ENCODE measurements at regions of chr5 and their contacts with region 1.

Region 1: DNA sequence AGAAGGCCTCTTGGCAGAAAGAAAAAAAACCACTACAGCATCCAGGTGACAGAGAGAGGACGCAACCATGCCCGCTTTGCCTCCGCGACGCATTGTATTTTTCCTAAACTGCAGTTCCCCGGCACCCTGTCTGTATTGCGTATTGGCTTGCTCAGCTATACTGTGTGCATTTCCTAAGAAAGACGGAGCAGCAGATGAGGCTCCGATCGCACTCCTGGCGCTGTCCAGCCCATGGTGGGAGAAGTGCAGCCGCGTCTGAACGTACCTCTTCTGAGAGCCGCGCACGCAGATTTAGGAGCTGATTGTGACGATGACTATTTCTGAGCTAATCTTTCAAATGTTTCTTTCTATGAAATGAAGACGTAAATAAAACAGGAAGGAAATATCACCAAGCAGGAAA is 366.5 kb downstream of the IRX1 start:
- DNase-seq: no peak
- H3K4me3 ChIP-seq: no peak overlapping the region
- H3K27ac ChIP-seq: no peak overlapping the region
- H3K4me1 ChIP-seq: no peaks in the 10 kb centered on the region
- H3K27me3 ChIP-seq: no peaks in the 10 kb centered on the region
- CTCF ChIP-seq: no peak
- EP300 ChIP-seq: no peak
- POLR2A ChIP-seq: no peak

Region 2: GRCh38 chr5:3671337-3671736 is 290.8 kb before region 1 on chr5:
- in situ Hi-C with region 1: no loop called
- intact Hi-C with region 1: no loop called
- DNase-seq: no peak
- H3K4me3 ChIP-seq: no peak overlapping the region
- H3K27ac ChIP-seq: no peak overlapping the region
- H3K4me1 ChIP-seq: no peaks in the 10 kb centered on the region
- H3K27me3 ChIP-seq: no peaks in the 10 kb centered on the region
- CTCF ChIP-seq: no peak
- EP300 ChIP-seq: no peak
- POLR2A ChIP-seq: no peak

Region 3: DNA sequence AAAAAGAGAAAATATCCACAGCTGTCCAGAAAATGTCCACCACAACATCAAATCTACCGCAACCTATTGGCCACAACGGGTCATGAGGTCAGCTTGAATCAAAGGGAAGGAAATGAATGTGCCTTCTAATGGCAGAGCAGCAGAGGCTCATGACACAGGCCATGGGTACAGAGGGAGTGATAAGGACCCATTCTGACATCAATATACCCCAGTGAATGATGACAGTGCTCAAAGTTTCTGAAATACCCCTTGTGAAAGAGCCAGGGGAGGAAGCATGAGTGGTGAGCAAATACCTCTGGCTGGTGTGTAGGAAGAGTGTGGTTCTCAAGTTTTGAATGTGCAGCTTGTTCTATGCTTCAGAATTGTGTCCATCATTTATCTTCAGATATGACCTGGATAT is 18.3 kb before region 1 on chr5:
- in situ Hi-C with region 1: no loop called
- intact Hi-C with region 1: no loop called
- DNase-seq: no peak
- H3K4me3 ChIP-seq: no peak overlapping the region
- H3K27ac ChIP-seq: no peak overlapping the region
- H3K4me1 ChIP-seq: no peaks in the 10 kb centered on the region
- H3K27me3 ChIP-seq: no peaks in the 10 kb centered on the region
- CTCF ChIP-seq: no peak
- EP300 ChIP-seq: no peak
- POLR2A ChIP-seq: no peak

Region 4: GRCh38 chr5:4130819-4131218 is 168.7 kb after region 1 on chr5:
- in situ Hi-C with region 1: no loop called
- intact Hi-C with region 1: loop called (anchors 2 kb)
- DNase-seq: no peak
- H3K4me3 ChIP-seq: no peak overlapping the region
- H3K27ac ChIP-seq: no peak overlapping the region
- H3K4me1 ChIP-seq: no peaks in the 10 kb centered on the region
- H3K27me3 ChIP-seq: no peaks in the 10 kb centered on the region
- CTCF ChIP-seq: no peak
- EP300 ChIP-seq: no peak
- POLR2A ChIP-seq: no peak

Region 5: GRCh38 chr5:4258170-4258569 is 296.1 kb after region 1 on chr5:
- in situ Hi-C with region 1: no loop called
- intact Hi-C with region 1: no loop called
- DNase-seq: no peak
- H3K4me3 ChIP-seq: no peak overlapping the region
- H3K27ac ChIP-seq: no peak overlapping the region
- H3K4me1 ChIP-seq: no peaks in the 10 kb centered on the region
- H3K27me3 ChIP-seq: no peaks in the 10 kb centered on the region
- CTCF ChIP-seq: no peak
- EP300 ChIP-seq: no peak
- POLR2A ChIP-seq: no peak